ENCODE measurements at regions of chr2 and their contacts with region 1.

Region 1: GRCh38 chr2:69306822-69307578 is 80.0 kb downstream of the GFPT1 start:
- DNase-seq: peak; percentile 77
- ATAC-seq: peak; percentile 90
- H3K4me3 ChIP-seq: peak overlapping the region; percentile 35; the same call in 1 of the 2 replicates
- H3K27ac ChIP-seq: peak overlapping the region; percentile 71
- H3K4me1 ChIP-seq: peaks cover 31% of the 10 kb centered on the region
- H3K27me3 ChIP-seq: no peaks in the 10 kb centered on the region
- CTCF ChIP-seq: peak; percentile 93
- POLR2A ChIP-seq: peak; percentile 57
- RAD21 ChIP-seq: peak; percentile 98

Region 2: DNA sequence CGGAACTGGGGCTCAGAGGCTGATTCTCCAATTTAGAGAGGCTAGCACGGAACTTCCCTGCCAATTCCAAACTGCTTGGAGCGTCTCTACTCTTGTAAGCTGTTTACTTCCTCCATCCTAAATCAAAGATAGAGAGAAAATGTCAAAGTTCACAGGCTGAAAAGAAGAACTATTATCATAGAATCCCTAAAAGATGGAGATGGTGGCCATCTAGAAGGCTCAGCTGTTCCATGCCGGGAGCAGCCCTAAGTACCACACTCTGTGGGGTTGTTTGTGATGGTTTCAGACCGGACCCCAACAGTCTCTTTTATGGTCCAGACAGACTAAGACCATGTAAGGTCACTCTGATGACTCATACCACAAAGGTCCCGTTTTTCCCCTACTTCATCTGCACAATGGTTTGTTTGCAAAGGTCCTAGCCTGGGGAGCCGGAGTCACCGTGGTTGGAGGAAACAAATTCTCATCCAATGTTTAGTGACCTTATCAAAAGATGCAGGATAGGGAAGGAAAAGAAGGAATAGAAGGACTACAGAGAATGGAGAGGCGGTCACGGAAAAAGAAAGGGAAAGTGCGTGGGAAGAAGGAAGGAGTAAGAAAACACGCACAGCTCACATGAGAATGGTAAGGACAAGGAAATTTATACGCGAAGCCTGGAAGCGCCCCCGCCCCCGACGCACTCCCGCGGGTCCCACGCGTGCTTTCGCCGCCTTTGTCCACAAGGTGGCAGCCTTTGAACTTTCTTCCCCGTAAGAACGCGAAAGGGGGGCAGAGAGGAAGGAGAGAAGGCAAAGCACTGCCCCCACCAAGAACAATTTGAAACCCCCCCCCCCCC is 294.5 kb before region 1 on chr2:
- CTCF ChIA-PET with region 1: interaction called, 5 read pairs
- POLR2A ChIA-PET with region 1: no interaction called
- dilution Hi-C with region 1: loop called (anchors 25 kb)
- in situ Hi-C with region 1: loop called (anchors 5 kb)
- intact Hi-C with region 1: loop called (anchors 1 kb)
- DNase-seq: peak; percentile 76
- ATAC-seq: peak; percentile 68
- H3K4me3 ChIP-seq: peak overlapping the region; percentile 99
- H3K27ac ChIP-seq: peak overlapping the region; percentile 89
- H3K4me1 ChIP-seq: peaks cover 3% of the 10 kb centered on the region; the same call in 1 of the 2 replicates
- H3K27me3 ChIP-seq: no peaks in the 10 kb centered on the region
- CTCF ChIP-seq: peak; percentile 78
- POLR2A ChIP-seq: no peak
- RAD21 ChIP-seq: peak; percentile 74

Region 3: DNA sequence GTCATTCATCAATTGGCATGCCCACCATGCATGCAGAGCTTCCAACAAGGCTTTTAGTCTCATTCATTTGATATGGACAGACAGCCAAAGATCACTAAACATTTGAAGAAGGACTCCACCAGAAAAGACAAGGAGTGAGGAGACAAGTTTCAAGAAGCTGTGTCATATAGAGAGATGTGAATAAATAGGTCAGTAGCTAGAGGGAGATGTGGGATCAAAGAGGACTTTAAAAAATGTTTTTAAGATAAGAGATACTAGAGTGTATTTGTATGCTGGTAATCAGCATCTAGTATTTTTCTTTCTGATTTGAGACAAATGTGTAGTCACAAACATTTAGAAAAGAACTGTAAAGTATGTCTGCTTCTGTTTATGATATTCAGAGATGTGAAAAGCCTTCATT is 245.5 kb before region 1 on chr2:
- CTCF ChIA-PET with region 1: no interaction called
- POLR2A ChIA-PET with region 1: no interaction called
- dilution Hi-C with region 1: no loop called
- in situ Hi-C with region 1: no loop called
- intact Hi-C with region 1: loop called (anchors 1 kb)
- DNase-seq: no peak
- ATAC-seq: peak; percentile 48; the same call in 1 of the 2 replicates
- H3K4me3 ChIP-seq: no peak overlapping the region
- H3K27ac ChIP-seq: no peak overlapping the region
- H3K4me1 ChIP-seq: peaks cover 17% of the 10 kb centered on the region
- H3K27me3 ChIP-seq: no peaks in the 10 kb centered on the region
- CTCF ChIP-seq: no peak
- POLR2A ChIP-seq: no peak
- RAD21 ChIP-seq: 0 out of 2 replicates have a peak, but pooled peaks have one; percentile 6

Region 4: DNA sequence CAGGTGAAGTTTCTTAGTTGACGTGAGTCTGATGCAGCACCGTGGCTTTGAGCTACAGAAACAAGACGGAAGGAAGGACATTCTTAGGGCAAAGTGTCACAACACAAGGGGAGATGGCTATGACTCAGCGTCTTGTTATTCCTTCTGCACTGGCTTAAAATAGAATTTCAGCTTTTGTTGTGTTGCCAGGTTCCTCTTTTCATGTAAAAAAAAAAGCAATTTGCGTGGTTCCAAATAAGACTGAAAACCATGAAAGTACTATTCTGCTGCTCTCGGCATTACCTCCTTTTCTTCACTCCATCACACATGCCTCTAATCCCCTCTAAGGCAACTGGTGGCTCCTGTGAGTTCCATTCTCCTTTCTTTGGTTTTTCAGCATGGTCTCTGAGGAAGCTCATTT is 143.9 kb before region 1 on chr2:
- CTCF ChIA-PET with region 1: no interaction called
- POLR2A ChIA-PET with region 1: no interaction called
- dilution Hi-C with region 1: no loop called
- in situ Hi-C with region 1: no loop called
- intact Hi-C with region 1: loop called (anchors 2 kb)
- DNase-seq: peak; percentile 88
- ATAC-seq: 0 out of 2 replicates have a peak, but pooled peaks have one; percentile 40
- H3K4me3 ChIP-seq: no peak overlapping the region
- H3K27ac ChIP-seq: peak overlapping the region; percentile 27
- H3K4me1 ChIP-seq: peaks cover 21% of the 10 kb centered on the region
- H3K27me3 ChIP-seq: no peaks in the 10 kb centered on the region
- CTCF ChIP-seq: no peak
- POLR2A ChIP-seq: no peak
- RAD21 ChIP-seq: peak; percentile 15; the same call in 1 of the 2 replicates

Region 5: GRCh38 chr2:69196327-69197117 is 110.5 kb before region 1 on chr2:
- CTCF ChIA-PET with region 1: no interaction called
- POLR2A ChIA-PET with region 1: no interaction called
- dilution Hi-C with region 1: no loop called
- in situ Hi-C with region 1: no loop called
- intact Hi-C with region 1: loop called (anchors 5 kb)
- DNase-seq: peak; percentile 98
- ATAC-seq: peak; percentile 77
- H3K4me3 ChIP-seq: no peak overlapping the region
- H3K27ac ChIP-seq: peak overlapping the region; percentile 98
- H3K4me1 ChIP-seq: peaks cover 22% of the 10 kb centered on the region
- H3K27me3 ChIP-seq: no peaks in the 10 kb centered on the region
- CTCF ChIP-seq: no peak
- POLR2A ChIP-seq: 0 out of 2 replicates have a peak, but pooled peaks have one; percentile 35
- RAD21 ChIP-seq: peak; percentile 33

Region 6: GRCh38 chr2:69322631-69323030 is 15.6 kb after region 1 on chr2:
- CTCF ChIA-PET with region 1: no interaction called
- POLR2A ChIA-PET with region 1: no interaction called
- dilution Hi-C with region 1: no loop called
- in situ Hi-C with region 1: no loop called
- intact Hi-C with region 1: no loop called
- DNase-seq: no peak
- ATAC-seq: no peak
- H3K4me3 ChIP-seq: no peak overlapping the region
- H3K27ac ChIP-seq: no peak overlapping the region
- H3K4me1 ChIP-seq: peaks cover 9% of the 10 kb centered on the region
- H3K27me3 ChIP-seq: no peaks in the 10 kb centered on the region
- CTCF ChIP-seq: no peak
- POLR2A ChIP-seq: no peak
- RAD21 ChIP-seq: no peak

Measured in IMR-90 (cell line).